PC-9 (cell line): ENCODE measurements at regions of chr20 and their contacts with region 1.

Region 1: DNA sequence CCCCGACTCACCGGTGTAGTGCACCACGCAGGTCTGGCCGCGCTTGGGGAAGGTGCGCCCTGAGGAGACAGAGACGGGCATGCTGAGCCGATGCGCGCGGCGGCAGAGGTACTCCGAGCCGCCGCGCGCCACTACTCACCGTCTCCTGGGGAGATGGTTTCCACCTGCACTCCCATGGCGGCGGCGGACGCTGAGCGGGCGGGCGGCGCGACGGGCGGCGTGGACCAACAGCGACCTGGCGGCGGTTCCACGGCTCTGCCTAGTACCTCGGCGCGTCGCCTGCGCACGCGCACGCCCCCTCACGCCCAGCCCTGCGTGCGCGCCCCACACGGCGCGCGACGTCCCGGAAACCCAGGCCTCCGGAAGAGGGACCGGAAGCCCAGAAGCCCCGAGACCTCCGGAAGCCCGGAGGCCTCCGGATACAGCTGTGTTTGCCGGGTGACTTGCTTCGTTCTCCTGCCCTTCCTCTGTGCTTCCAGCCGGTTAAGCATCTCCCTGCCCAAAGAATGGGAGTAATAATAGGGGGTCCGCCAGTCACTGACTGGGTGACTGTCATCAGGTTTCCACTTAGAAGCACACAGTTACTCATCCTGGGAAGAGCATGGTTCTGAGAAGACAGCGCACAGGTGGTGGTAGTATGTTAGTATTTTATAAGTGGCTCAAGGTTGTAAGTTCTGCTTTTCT is at the start of gene FKBP1A:
- DNase-seq: peak; percentile 83 to 89
- H3K4me3 ChIP-seq: peak within 1 kb of the TSS; percentile 97
- H3K27ac ChIP-seq: peak within 1 kb of the TSS; percentile 40; the same call in 1 of the 2 replicates
- H3K4me1 ChIP-seq: peaks cover 57% of the 10 kb centered on the region
- H3K27me3 ChIP-seq: no peaks in the 10 kb centered on the region
- CTCF ChIP-seq: no peak; the same call in 1 of the 2 replicates
- total RNA-seq, gene FKBP1A: 248 and 320 TPM in 2 replicates

Region 2: DNA sequence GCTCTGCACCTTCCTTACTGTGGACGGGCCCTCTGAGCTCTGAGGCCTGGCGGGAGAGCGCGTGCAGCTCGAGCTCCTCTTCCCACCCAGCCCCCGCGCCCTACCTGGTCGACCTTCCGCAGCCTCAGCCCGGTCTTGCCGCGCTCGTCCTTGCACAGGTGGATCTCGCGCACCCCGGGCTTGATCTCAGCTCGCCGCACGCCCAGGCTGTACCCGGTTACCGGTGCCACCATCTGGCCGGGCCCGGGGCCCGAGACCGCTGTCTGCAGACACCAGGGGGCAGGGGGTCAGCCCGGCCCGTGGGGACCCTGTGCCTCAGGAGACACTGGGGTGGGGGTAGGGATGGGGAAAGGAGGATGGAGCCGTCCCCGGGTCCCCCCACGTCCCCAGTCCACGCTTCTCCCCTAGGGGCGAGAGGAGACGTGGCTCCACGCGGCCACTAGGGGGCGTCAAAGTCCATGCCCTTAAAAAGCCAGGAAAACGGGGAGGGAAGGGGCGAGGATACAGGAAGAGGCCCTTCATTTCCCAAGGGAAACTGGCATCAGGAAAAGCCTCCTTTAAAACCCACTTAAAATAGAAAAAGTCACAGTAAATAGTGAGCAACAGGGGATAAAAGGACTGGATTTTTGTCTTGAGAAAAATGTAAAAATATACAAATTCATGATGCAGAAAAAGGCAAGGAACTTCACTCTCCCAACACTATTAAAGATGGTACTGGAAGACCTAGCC is 79.6 kb before region 1 on chr20:
- CTCF ChIA-PET with region 1: interaction called, 11 read pairs
- POLR2A ChIA-PET with region 1: no interaction called
- intact Hi-C with region 1: no loop called
- DNase-seq: peak in 1 of 2 experiments; percentile 60
- H3K4me3 ChIP-seq: no peak overlapping the region
- H3K27ac ChIP-seq: no peak overlapping the region
- H3K4me1 ChIP-seq: no peaks in the 10 kb centered on the region
- H3K27me3 ChIP-seq: no peaks in the 10 kb centered on the region
- CTCF ChIP-seq: peak; percentile 96

Region 3: DNA sequence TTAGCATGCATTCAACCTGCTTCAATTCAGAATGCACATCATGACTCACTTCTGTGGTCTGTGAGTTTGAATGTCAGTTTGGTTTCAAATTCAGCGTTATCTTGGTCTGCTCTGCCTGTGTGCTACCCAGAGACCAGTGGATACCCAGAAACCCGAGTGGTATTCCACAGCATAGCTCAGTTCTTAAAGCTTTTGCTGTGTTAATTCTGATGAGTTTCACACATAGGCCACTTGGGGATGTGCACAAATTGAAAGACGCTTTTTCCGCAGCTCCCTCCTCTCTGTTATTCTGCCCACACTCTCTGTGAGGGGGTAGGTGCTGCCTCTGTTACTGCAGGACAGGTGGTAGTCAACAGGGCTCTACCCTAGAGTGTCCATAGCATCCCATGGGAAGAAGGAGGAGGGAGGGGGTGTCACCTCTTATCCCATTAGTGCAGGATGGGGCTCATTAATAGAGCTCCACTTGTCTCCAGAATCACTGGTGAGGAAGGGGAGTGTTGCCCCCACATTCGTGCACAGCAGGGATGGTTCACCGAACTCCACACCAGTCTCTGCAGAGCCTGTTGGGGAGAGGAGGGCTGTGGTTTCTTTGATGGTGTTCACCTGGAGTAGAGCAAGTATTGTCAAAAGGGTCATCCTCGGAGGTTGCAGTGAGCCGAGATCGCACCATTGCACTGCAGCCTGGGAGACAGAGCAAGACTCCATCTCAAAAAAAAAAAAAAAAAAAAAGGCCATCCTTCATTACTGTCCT is 34.9 kb before region 1 on chr20:
- CTCF ChIA-PET with region 1: interaction called, 15 read pairs
- POLR2A ChIA-PET with region 1: no interaction called
- intact Hi-C with region 1: no loop called
- DNase-seq: no peak
- H3K4me3 ChIP-seq: no peak overlapping the region
- H3K27ac ChIP-seq: no peak overlapping the region
- H3K4me1 ChIP-seq: no peaks in the 10 kb centered on the region
- H3K27me3 ChIP-seq: no peaks in the 10 kb centered on the region
- CTCF ChIP-seq: no peak

Region 4: DNA sequence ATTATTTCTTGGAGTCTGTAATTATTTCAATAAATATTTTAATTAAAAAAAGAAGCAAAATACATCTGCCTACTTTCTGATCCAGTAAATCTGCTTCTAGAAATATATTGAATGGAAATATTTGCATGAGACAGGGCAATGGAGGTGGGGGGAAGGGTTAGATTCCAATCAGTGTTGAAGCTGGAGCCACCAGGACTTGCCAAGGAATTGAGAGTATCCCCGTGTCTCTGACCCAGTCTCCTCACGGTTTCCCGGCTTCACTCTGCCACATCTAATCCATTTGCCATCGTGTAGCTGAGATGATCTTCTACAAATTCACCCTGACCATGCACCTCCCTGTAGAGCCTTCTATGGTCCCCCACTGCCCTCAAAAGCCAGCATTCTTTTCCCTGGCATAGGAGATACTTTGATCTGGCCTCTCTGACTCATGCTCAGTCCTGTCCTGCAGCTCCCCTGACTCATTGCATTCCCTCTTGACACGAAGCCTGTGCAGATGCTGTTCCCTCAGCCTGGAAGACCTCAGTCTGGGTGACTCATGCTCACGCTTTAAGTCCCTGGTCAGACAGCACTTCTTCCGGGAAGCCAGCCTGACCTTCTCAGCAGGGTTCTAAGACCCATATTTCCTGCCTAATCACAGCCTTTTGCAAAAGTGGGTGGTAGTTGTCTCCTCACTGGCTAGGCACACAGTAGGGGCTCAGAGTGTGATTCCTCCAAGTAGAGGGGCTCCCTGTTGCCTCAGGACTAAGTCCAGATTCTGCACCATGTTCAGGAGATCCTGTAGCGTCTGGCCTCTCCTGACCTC is 22.9 kb after region 1 on chr20:
- CTCF ChIA-PET with region 1: interaction called, 8 read pairs
- POLR2A ChIA-PET with region 1: interaction called, 27 read pairs
- intact Hi-C with region 1: loop called (anchors 1 kb)
- DNase-seq: peak; percentile 87 to 99
- H3K4me3 ChIP-seq: no peak overlapping the region
- H3K27ac ChIP-seq: peak overlapping the region; percentile 70
- H3K4me1 ChIP-seq: peaks cover 47% of the 10 kb centered on the region
- H3K27me3 ChIP-seq: no peaks in the 10 kb centered on the region
- CTCF ChIP-seq: no peak

Region 5: GRCh38 chr20:1466211-1467081 is 73.5 kb after region 1 on chr20 and contains the start of gene NSFL1C:
- CTCF ChIA-PET with region 1: no interaction called
- POLR2A ChIA-PET with region 1: interaction called, 42 read pairs
- intact Hi-C with region 1: loop called (anchors 2 kb)
- DNase-seq: peak; percentile 79 to 98
- H3K4me3 ChIP-seq: peak within 1 kb of the TSS; percentile 88
- H3K27ac ChIP-seq: peak within 1 kb of the TSS; percentile 89
- H3K4me1 ChIP-seq: peaks cover 37% of the 10 kb centered on the region
- H3K27me3 ChIP-seq: no peaks in the 10 kb centered on the region
- CTCF ChIP-seq: peak; percentile 89
- total RNA-seq, gene NSFL1C: 151 and 160 TPM in 2 replicates